Mammary epithelial cell (primary cell): ENCODE measurements at regions of chr10 and their contacts with region 1.

Region 1: DNA sequence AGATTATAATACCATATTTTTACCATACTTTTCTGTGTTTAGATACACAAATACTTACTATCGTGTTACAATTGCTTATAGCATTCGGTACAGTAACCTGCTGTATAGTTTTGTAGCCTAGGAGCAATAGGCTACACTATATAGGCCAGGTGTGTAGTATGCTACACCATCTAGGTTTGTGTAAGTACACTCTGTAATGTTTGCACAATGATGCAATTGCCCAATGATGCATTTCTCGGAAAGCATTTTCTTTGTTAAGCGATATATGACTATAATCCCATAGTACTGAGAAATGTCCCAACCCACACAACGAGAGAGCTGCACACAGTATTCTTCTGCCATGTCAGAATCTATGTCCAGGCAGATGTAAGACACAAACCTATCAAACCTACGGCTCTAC is 160.0 kb downstream of the NEBL start:
- DNase-seq: no peak
- H3K4me3 ChIP-seq: no peak overlapping the region
- H3K27ac ChIP-seq: no peak overlapping the region
- H3K4me1 ChIP-seq: no peaks in the 10 kb centered on the region
- H3K27me3 ChIP-seq: no peaks in the 10 kb centered on the region
- CTCF ChIP-seq: no peak

Region 2: GRCh38 chr10:20457649-20458048 is 279.5 kb before region 1 on chr10:
- CTCF ChIA-PET with region 1: no interaction called
- dilution Hi-C with region 1: no loop called
- in situ Hi-C with region 1: no loop called
- intact Hi-C with region 1: no loop called
- DNase-seq: no peak
- H3K4me3 ChIP-seq: no peak overlapping the region
- H3K27ac ChIP-seq: no peak overlapping the region
- H3K4me1 ChIP-seq: no peaks in the 10 kb centered on the region
- H3K27me3 ChIP-seq: no peaks in the 10 kb centered on the region
- CTCF ChIP-seq: no peak

Region 3: GRCh38 chr10:20485554-20485953 is 251.6 kb before region 1 on chr10:
- CTCF ChIA-PET with region 1: no interaction called
- dilution Hi-C with region 1: no loop called
- in situ Hi-C with region 1: no loop called
- intact Hi-C with region 1: no loop called
- DNase-seq: no peak
- H3K4me3 ChIP-seq: no peak overlapping the region
- H3K27ac ChIP-seq: no peak overlapping the region
- H3K4me1 ChIP-seq: no peaks in the 10 kb centered on the region
- H3K27me3 ChIP-seq: peaks cover 2% of the 10 kb centered on the region
- CTCF ChIP-seq: no peak

Region 4: GRCh38 chr10:20707251-20707650 is 29.9 kb before region 1 on chr10:
- CTCF ChIA-PET with region 1: no interaction called
- dilution Hi-C with region 1: loop called (anchors 5 kb)
- in situ Hi-C with region 1: no loop called
- intact Hi-C with region 1: no loop called
- DNase-seq: no peak
- H3K4me3 ChIP-seq: no peak overlapping the region
- H3K27ac ChIP-seq: no peak overlapping the region
- H3K4me1 ChIP-seq: no peaks in the 10 kb centered on the region
- H3K27me3 ChIP-seq: no peaks in the 10 kb centered on the region
- CTCF ChIP-seq: no peak